ENCODE measurements at regions of chr22 and their contacts with region 1.

Region 1: GRCh38 chr22:29837780-29838598 is at the start of gene ASCC2:
- DNase-seq: peak; percentile 98
- H3K4me3 Mint-ChIP-seq: peak within 1 kb of the TSS; percentile 93
- H3K27ac Mint-ChIP-seq: peak within 1 kb of the TSS; percentile 91
- H3K4me1 Mint-ChIP-seq: peaks cover 25% of the 10 kb centered on the region
- H3K27me3 Mint-ChIP-seq: no peaks in the 10 kb centered on the region
- CTCF ChIP-seq: no peak
- total RNA-seq, gene ASCC2: 63.2 and 70.7 TPM in 2 replicates

Region 2: GRCh38 chr22:29820961-29821789 is 16.8 kb before region 1 on chr22:
- CTCF ChIA-PET with region 1: no interaction called
- POLR2A ChIA-PET with region 1: interaction called, 22 read pairs
- intact Hi-C with region 1: no loop called
- DNase-seq: peak; percentile 92
- H3K4me3 Mint-ChIP-seq: peak overlapping the region; percentile 9
- H3K27ac Mint-ChIP-seq: peak overlapping the region; percentile 70
- H3K4me1 Mint-ChIP-seq: peaks cover 16% of the 10 kb centered on the region
- H3K27me3 Mint-ChIP-seq: no peaks in the 10 kb centered on the region
- CTCF ChIP-seq: no peak

Region 3: GRCh38 chr22:29883045-29883774 is 45.2 kb after region 1 on chr22 and contains the start of gene MTMR3:
- CTCF ChIA-PET with region 1: interaction called, 3 read pairs
- POLR2A ChIA-PET with region 1: interaction called, 13 read pairs
- intact Hi-C with region 1: loop called (anchors 1 kb)
- DNase-seq: peak; percentile 87
- H3K4me3 Mint-ChIP-seq: peak within 1 kb of the TSS; percentile 84
- H3K27ac Mint-ChIP-seq: peak within 1 kb of the TSS; percentile 71
- H3K4me1 Mint-ChIP-seq: peaks cover 7% of the 10 kb centered on the region
- H3K27me3 Mint-ChIP-seq: no peaks in the 10 kb centered on the region
- CTCF ChIP-seq: peak; percentile 44
- total RNA-seq, gene MTMR3: 34.4 and 36.4 TPM in 2 replicates

Region 4: DNA sequence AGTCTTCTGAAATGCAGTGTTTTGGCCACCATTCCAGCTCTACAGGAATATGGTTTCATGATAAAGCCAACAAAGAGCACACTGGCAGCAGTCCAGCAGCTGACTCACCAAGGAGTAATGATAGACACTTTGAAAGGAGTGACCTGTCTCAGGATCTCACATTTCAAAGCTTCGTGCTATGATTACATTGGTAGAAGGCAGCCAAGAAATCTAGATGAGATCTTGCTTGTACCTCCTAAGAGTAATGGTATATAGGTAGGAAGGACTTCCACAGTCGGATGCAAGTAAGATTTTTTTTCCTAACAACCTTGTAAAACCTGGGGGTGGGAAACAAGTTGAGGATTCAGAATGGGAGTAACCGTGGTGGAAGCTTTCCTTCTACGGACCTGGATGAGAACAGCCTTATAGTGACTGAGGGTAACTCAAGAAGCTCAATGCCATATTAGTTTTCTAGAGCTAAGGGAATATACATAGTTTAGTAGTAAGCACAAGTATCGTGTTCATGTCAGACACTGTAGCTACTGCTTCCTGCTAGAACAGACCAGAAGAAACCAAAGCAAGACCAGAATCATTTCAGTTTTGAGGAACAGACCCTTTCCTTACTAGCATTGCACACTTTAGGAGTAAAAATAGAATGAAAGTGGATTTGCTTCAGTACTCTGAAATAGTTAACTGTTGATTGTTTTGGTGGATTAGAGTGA is 70.0 kb after region 1 on chr22:
- CTCF ChIA-PET with region 1: no interaction called
- POLR2A ChIA-PET with region 1: interaction called, 10 read pairs
- intact Hi-C with region 1: no loop called
- DNase-seq: peak; percentile 98
- H3K4me3 Mint-ChIP-seq: peak overlapping the region; percentile 60
- H3K27ac Mint-ChIP-seq: peak overlapping the region; percentile 52
- H3K4me1 Mint-ChIP-seq: peaks cover 25% of the 10 kb centered on the region
- H3K27me3 Mint-ChIP-seq: no peaks in the 10 kb centered on the region
- CTCF ChIP-seq: no peak

Region 5: GRCh38 chr22:29994027-29994715 is 156.2 kb after region 1 on chr22:
- CTCF ChIA-PET with region 1: interaction called, 6 read pairs
- POLR2A ChIA-PET with region 1: interaction called, 5 read pairs
- intact Hi-C with region 1: loop called (anchors 1 kb)
- DNase-seq: peak; percentile 78
- H3K4me3 Mint-ChIP-seq: no peak overlapping the region
- H3K27ac Mint-ChIP-seq: peak overlapping the region; percentile 86
- H3K4me1 Mint-ChIP-seq: peaks cover 31% of the 10 kb centered on the region
- H3K27me3 Mint-ChIP-seq: no peaks in the 10 kb centered on the region
- CTCF ChIP-seq: peak; percentile 34

Measured in MCF 10A (cell line).